Uterus (tissue), 4 donors: ENCODE measurements at regions of chr17 and their contacts with region 1.

Region 1: DNA sequence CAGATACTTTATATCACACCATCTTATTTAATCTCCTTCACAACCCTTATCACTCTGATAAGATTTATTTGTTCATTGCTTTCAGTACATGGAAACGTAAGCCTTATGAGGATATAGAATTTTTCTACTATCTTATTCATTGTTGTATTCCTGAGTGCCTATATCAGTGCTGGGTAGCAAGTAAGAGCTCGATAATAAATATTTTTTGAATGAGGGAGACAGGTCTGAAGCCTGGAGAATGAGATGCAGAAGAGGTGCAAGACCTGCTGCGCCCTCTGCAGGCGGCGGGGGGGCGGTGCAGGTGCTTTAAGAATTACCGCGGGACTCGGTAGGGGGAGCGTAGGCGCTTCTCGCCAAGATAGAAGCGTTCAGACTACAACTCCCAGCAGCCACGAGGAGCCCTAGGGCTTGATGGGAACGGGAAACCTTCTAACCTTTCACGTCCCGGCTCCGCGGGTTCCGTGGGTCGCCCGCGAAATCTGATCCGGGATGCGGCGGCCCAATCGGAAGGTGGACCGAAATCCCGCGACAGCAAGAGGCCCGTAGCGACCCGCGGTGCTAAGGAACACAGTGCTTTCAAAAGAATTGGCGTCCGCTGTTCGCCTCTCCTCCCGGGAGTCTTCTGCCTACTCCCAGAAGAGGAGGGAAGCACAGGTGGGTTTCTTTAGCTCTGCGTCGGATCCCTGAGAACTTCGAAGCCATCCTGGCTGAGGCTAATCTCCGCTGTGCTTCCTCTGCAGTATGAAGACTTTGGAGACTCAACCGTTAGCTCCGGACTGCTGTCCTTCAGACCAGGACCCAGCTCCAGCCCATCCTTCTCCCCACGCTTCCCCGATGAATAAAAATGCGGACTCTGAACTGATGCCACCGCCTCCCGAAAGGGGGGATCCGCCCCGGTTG is at the start of gene WRAP53:
- DNase-seq: peak; percentile 98 to 99
- H3K4me3 ChIP-seq: peak within 1 kb of the TSS; percentile 83 to 85
- H3K27ac ChIP-seq: peak within 1 kb of the TSS; percentile 94 to 98
- H3K4me1 ChIP-seq: peaks cover 6 to 16% of the 10 kb centered on the region in 2 donors
- H3K27me3 ChIP-seq: no peaks in the 10 kb centered on the region
- CTCF ChIP-seq: peak; percentile 96 to 99 (median 98)
- POLR2A ChIP-seq: peak; percentile 18 to 31
- total RNA-seq, gene WRAP53: 1.0 to 8.8 (median 6.2) TPM

Region 2: DNA sequence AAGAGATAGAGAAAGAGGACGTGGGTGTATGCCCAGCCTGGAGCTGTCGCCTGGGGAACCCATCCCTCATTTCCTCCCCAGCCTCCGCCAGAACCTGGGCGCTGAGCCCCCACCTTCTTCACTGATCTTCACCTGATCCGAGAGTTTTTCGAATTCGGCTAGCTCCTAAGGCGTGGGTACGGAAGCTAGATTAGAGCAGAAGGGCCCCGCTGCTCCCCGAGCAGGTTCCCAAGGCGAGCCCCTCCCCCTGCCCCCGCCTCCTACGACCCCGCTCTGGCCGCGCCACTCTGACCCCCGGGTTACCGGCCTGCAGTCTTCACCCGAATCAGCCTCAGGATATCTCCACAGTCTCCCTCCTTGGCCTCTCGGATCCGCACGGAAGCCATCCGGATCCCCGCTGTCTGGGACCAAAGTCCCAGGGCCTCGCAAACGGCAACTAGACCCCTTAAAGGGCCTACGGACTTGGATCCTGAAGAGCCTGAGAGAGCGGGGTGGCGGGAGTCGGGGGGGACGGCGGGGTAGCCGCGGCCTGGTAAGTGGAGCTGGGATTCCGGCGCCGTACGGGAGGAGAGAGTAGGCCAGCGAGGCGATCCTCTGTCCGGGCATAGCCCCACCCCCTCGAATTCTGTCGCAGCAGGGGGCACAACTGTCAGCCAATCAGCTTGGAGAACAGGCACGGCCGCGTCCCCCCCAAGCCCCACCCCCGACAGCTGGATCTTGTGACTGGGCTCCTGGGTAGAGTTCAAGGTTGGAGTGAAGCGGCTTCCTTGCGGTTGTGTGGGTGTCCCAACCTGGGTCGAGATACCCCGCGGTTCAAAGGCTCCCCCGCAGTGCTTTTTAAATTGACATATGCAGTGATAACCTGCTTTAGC is 60.7 kb before region 1 on chr17 and contains the start of gene SAT2:
- intact Hi-C with region 1: loop called (anchors 5 kb)
- DNase-seq: peak; percentile 96 to 97
- H3K4me3 ChIP-seq: peak within 1 kb of the TSS; percentile 61 to 70
- H3K27ac ChIP-seq: peak within 1 kb of the TSS; percentile 88 to 90
- H3K4me1 ChIP-seq: no peaks in the 10 kb centered on the region
- H3K27me3 ChIP-seq: no peaks in the 10 kb centered on the region
- CTCF ChIP-seq: no peak
- POLR2A ChIP-seq: peak; percentile 64 to 68
- total RNA-seq, gene SAT2: 18.5 to 74.8 (median 46.0) TPM